K562 (cell line): ENCODE measurements at regions of chrX and their contacts with region 1.

Region 1: GRCh38 chrX:118603981-118604380 is 108.4 kb downstream of the DOCK11 start:
- DNase-seq: peak; percentile 50 to 70 (median 52)
- ATAC-seq: peak; percentile 90
- H3K4me3 ChIP-seq: no peak overlapping the region
- H3K27ac ChIP-seq: no peak overlapping the region
- H3K4me1 ChIP-seq: no peaks in the 10 kb centered on the region; a peak in 1 of 5 replicates
- H3K27me3 ChIP-seq: no peaks in the 10 kb centered on the region
- CTCF ChIP-seq: peak; percentile 62 to 83 (median 81)
- EP300 ChIP-seq: no peak
- POLR2A ChIP-seq: no peak
- RAD21 ChIP-seq: peak; percentile 37 to 68; a peak in 2 of 4 replicates

Region 2: DNA sequence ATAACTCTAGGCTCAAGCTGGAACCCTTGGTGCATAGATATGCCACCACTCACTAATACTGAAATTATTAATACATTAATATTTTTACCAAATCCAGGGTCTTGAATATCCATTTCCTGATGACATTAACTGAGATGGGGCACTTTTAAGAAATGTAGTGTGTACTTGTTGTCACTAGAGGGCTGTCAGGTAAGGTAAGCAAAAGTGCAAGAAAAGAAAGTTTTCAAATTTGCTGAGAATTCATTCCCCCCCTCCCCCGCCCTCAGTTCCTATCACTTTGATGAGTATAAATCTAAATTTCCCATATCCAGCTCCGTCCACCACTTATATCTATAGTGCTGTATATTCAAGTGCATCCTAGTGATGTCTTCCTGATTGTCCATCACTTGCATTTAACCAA is 278.5 kb before region 1 on chrX:
- CTCF ChIA-PET with region 1: no interaction called
- POLR2A ChIA-PET with region 1: no interaction called
- in situ Hi-C with region 1: no loop called
- intact Hi-C with region 1: loop called (anchors 10 kb)
- DNase-seq: peak; percentile 14 to 29 (median 20)
- ATAC-seq: peak; percentile 44; the same call in 2 of the 3 replicates
- H3K4me3 ChIP-seq: no peak overlapping the region
- H3K27ac ChIP-seq: no peak overlapping the region
- H3K4me1 ChIP-seq: peaks cover 0 to 7% of the 10 kb centered on the region in 2 experiments; a peak in 3 of 5 replicates
- H3K27me3 ChIP-seq: no peaks in the 10 kb centered on the region
- CTCF ChIP-seq: peak; percentile 20 to 38 (median 34); a peak in 2 of 6 replicates
- EP300 ChIP-seq: no peak
- POLR2A ChIP-seq: no peak
- RAD21 ChIP-seq: peak in 1 of 2 experiments; percentile 39; a peak in 2 of 4 replicates

Region 3: GRCh38 chrX:118459494-118459893 is 144.5 kb before region 1 on chrX:
- CTCF ChIA-PET with region 1: interaction called, 14 read pairs
- POLR2A ChIA-PET with region 1: interaction called, 6 read pairs
- in situ Hi-C with region 1: loop called (anchors 10 kb)
- intact Hi-C with region 1: loop called (anchors 1 kb)
- DNase-seq: peak; percentile 44 to 68 (median 52)
- ATAC-seq: peak; percentile 89
- H3K4me3 ChIP-seq: no peak overlapping the region
- H3K27ac ChIP-seq: no peak overlapping the region
- H3K4me1 ChIP-seq: peaks cover 0 to 2% of the 10 kb centered on the region in 2 experiments; a peak in 2 of 5 replicates
- H3K27me3 ChIP-seq: no peaks in the 10 kb centered on the region
- CTCF ChIP-seq: peak; percentile 63 to 81 (median 71)
- EP300 ChIP-seq: no peak
- POLR2A ChIP-seq: no peak
- RAD21 ChIP-seq: peak; percentile 76 to 90

Region 4: GRCh38 chrX:118468122-118468521 is 135.9 kb before region 1 on chrX:
- CTCF ChIA-PET with region 1: no interaction called
- POLR2A ChIA-PET with region 1: interaction called, 3 read pairs
- in situ Hi-C with region 1: loop called (anchors 10 kb)
- intact Hi-C with region 1: no loop called
- DNase-seq: no peak
- ATAC-seq: no peak
- H3K4me3 ChIP-seq: no peak overlapping the region
- H3K27ac ChIP-seq: no peak overlapping the region
- H3K4me1 ChIP-seq: peaks cover 0 to 7% of the 10 kb centered on the region in 2 experiments; a peak in 2 of 5 replicates
- H3K27me3 ChIP-seq: no peaks in the 10 kb centered on the region
- CTCF ChIP-seq: no peak
- EP300 ChIP-seq: no peak
- POLR2A ChIP-seq: no peak
- RAD21 ChIP-seq: no peak

Region 5: DNA sequence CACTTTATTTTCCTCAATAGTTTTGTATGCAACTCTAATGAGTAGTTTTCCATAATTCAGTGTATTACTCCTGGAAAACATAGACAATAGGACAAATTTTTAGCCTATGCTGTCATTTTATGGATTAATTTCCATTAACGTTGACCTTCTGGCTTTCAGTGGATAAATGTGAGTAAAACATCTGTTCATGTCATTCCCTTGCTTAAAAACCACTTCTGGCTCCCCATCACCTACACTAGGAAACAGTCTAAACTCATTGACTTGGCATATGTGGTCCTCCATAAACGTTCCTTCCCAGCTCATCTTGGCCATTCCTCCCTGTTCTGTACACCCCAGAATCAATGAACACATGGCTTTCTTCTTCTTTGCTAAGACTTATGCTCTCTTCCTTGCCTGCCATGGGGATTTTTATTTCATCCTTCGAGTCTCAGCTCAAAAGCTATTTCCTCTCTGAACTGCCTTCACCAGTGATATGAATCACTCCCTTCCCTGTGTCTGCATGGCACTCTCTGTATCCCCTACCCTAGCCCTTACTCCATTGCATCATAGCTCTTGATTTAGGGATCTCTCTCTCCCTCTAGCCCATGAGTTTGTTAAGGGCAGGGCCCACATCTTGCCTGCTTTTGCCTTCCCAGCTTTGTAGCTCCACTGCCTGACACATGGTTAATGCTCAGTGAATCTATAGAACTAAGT is 73.6 kb before region 1 on chrX:
- CTCF ChIA-PET with region 1: no interaction called
- POLR2A ChIA-PET with region 1: no interaction called
- in situ Hi-C with region 1: no loop called
- intact Hi-C with region 1: loop called (anchors 5 kb)
- DNase-seq: no peak
- ATAC-seq: peak; percentile 66
- H3K4me3 ChIP-seq: no peak overlapping the region
- H3K27ac ChIP-seq: peak overlapping the region; percentile 64; the same call in 2 of the 3 replicates
- H3K4me1 ChIP-seq: peaks cover 3 to 41% of the 10 kb centered on the region in 2 experiments; a peak in 3 of 5 replicates
- H3K27me3 ChIP-seq: no peaks in the 10 kb centered on the region
- CTCF ChIP-seq: no peak
- EP300 ChIP-seq: no peak
- POLR2A ChIP-seq: no peak
- RAD21 ChIP-seq: no peak